ENCODE measurements at regions of chr5 and their contacts with region 1.

Region 1: DNA sequence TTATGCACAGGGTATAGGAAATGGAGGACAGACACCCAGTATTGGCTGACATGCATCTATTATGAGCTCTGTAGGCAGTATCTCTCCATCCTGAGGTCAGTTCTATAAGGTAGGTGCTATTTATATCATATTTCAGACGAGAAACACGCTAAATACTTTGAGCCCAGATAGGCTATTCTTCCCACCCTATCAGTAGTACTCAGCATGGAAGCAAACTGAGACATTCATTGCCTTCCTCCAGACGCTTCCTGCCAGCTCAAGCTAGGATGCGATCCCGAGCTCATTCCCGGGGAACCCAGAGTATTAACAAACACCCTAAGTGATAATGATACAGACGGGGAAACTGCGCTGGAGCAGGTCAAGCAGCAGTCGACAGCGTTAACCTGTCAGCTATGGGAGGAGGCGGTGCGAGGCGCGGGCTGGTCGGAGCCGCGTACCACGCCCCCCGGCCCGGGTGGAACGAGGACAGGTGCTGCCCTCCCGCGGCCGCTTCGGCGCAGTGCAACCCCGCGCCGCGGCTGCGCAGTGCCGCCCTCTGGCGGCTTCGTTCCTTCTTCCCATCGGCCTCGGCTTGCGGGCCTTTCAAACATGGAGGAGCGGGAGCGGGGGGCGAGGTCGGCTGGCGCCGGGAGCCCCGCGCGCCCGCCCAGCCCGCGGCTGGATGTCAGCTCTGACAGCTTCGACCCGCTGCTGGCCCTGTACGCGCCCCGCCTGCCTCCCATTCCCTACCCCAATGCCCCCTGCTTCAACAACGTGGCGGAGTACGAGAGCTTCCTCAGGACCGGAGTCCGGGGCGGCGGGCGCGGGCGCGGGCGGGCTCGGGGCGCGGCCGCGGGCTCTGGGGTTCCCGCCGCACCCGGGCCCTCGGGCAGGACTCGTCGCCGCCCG is at the start of gene LSM11:
- DNase-seq: peak; percentile 85 to 94 (median 88)
- H3K4me3 ChIP-seq: peak within 1 kb of the TSS; percentile 50 to 63
- H3K4me3 Mint-ChIP-seq: peak within 1 kb of the TSS; percentile 93 to 98 (median 96)
- H3K27ac ChIP-seq: peak within 1 kb of the TSS; percentile 45
- H3K27ac Mint-ChIP-seq: peak within 1 kb of the TSS; percentile 62 to 96 (median 94)
- H3K4me1 ChIP-seq: peaks cover 18% of the 10 kb centered on the region
- H3K4me1 Mint-ChIP-seq: peaks cover 19 to 34% (median 28%) of the 10 kb centered on the region in 4 donors
- H3K27me3 ChIP-seq: no peaks in the 10 kb centered on the region
- H3K27me3 Mint-ChIP-seq: no peaks in the 10 kb centered on the region
- total RNA-seq, gene LSM11: 4.4 to 4.8 TPM

Region 2: DNA sequence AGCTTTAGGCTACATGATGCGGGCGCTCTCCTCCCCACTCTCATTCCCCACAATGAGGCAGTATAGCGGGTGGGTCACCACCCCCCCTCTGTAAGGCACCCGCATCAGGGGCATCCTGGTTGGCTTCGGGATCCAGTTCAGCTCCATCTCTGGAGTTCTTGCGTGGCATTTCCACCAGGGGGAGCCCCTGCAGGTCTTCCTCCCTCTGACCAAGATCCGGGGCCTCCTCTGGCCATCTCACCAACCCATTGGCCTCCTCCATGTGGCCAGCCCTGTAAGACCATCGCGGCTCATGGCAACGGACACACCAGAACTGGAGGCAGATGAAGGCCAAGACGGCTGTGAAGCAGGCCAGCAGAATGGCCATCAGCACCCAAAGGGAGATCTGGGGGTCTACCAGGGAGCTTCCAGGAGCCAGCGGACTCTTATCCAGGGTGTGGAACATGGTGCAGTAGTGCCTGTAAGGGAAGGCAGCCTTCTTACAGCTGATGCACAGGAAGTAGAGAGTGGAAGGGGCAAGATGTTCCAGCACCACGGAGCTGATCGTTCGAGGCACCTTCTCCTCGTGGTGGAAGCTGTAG is 400.5 kb before region 1 on chr5:
- CTCF ChIA-PET with region 1: interaction called, 22 read pairs
- POLR2A ChIA-PET with region 1: interaction called, 3 read pairs
- intact Hi-C with region 1: loop called (anchors 5 kb)
- DNase-seq: peak in 2 of 5 donors; percentile 15 to 21
- H3K4me3 ChIP-seq: no peak overlapping the region
- H3K4me3 Mint-ChIP-seq: peak overlapping the region in 1 of 8 donors; percentile 8
- H3K27ac ChIP-seq: no peak overlapping the region
- H3K27ac Mint-ChIP-seq: peak overlapping the region in 5 of 7 donors; percentile 18 to 89 (median 41)
- H3K4me1 ChIP-seq: peaks cover 15% of the 10 kb centered on the region
- H3K4me1 Mint-ChIP-seq: peaks cover 19 to 29% (median 24%) of the 10 kb centered on the region in 4 donors
- H3K27me3 ChIP-seq: no peaks in the 10 kb centered on the region
- H3K27me3 Mint-ChIP-seq: no peaks in the 10 kb centered on the region

Region 3: DNA sequence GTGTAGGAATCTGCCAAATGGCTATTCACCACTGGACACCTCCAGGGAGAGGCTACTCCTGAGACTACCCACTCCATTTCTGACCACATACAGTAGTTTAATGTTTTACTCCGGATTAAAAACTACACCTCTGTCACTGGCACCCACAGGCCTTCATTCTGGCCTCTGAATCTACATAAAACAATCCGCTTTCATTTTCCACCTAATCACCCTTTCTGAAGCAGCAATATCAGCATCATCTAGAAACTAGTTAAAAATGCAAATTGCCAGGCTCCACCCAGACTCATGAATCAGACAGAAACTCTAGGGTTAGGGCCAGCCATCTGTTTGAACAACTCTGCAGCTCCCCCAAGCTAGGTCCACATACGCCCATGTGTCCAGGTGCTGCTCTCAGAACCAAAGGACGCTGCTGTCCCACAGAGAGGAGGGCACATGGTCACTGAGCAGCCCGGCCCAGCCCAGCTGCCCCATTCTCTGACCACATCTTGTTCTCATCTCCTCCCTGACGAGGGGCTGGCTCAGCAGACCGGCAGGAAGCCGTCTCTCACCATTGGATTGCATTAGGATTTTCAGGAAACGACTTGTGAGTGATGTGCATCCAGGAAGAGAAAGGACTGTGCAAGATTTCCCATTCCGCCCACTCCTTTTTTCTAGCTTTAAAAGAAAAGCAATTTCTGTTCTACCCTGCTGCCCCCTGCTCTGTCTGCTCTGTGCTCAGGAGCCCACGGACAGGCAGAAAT is 202.5 kb before region 1 on chr5:
- CTCF ChIA-PET with region 1: interaction called, 24 read pairs
- POLR2A ChIA-PET with region 1: no interaction called
- intact Hi-C with region 1: loop called (anchors 5 kb)
- DNase-seq: peak; percentile 53 to 75 (median 62)
- H3K4me3 ChIP-seq: peak overlapping the region; percentile 12 to 40
- H3K4me3 Mint-ChIP-seq: peak overlapping the region; percentile 71 to 90 (median 80)
- H3K27ac ChIP-seq: peak overlapping the region; percentile 77
- H3K27ac Mint-ChIP-seq: peak overlapping the region; percentile 89 to 95 (median 93)
- H3K4me1 ChIP-seq: peaks cover 95% of the 10 kb centered on the region
- H3K4me1 Mint-ChIP-seq: peaks cover 73 to 94% (median 84%) of the 10 kb centered on the region in 4 donors
- H3K27me3 ChIP-seq: no peaks in the 10 kb centered on the region
- H3K27me3 Mint-ChIP-seq: no peaks in the 10 kb centered on the region

Region 4: GRCh38 chr5:157651623-157652549 is 91.5 kb before region 1 on chr5 and contains the start of gene SOX30:
- CTCF ChIA-PET with region 1: interaction called, 17 read pairs
- POLR2A ChIA-PET with region 1: interaction called, 4 read pairs
- intact Hi-C with region 1: loop called (anchors 1 kb)
- DNase-seq: peak; percentile 85 to 89 (median 86)
- H3K4me3 ChIP-seq: peak within 1 kb of the TSS in 1 of 2 donors; percentile 51
- H3K4me3 Mint-ChIP-seq: peak within 1 kb of the TSS; percentile 78 to 89 (median 84)
- H3K27ac ChIP-seq: peak within 1 kb of the TSS; percentile 52
- H3K27ac Mint-ChIP-seq: peak within 1 kb of the TSS; percentile 65 to 91 (median 86)
- H3K4me1 ChIP-seq: peaks cover 18% of the 10 kb centered on the region
- H3K4me1 Mint-ChIP-seq: peaks cover 11 to 26% (median 18%) of the 10 kb centered on the region in 4 donors
- H3K27me3 ChIP-seq: no peaks in the 10 kb centered on the region
- H3K27me3 Mint-ChIP-seq: no peaks in the 10 kb centered on the region
- total RNA-seq, gene SOX30: 0.14 to 0.15 TPM

Region 5: GRCh38 chr5:157670662-157671591 is 72.5 kb before region 1 on chr5 and contains the start of gene C5orf52:
- CTCF ChIA-PET with region 1: interaction called, 27 read pairs
- POLR2A ChIA-PET with region 1: interaction called, 5 read pairs
- intact Hi-C with region 1: loop called (anchors 1 kb)
- DNase-seq: peak in 2 of 5 donors; percentile 21 to 23
- H3K4me3 ChIP-seq: peak within 1 kb of the TSS; percentile 71 to 85
- H3K4me3 Mint-ChIP-seq: peak within 1 kb of the TSS; percentile 87 to 98 (median 92)
- H3K27ac ChIP-seq: peak within 1 kb of the TSS; percentile 3
- H3K27ac Mint-ChIP-seq: peak within 1 kb of the TSS in 6 of 7 donors; percentile 25 to 90 (median 78)
- H3K4me1 ChIP-seq: peaks cover 13% of the 10 kb centered on the region
- H3K4me1 Mint-ChIP-seq: peaks cover 15 to 27% (median 21%) of the 10 kb centered on the region in 4 donors
- H3K27me3 ChIP-seq: no peaks in the 10 kb centered on the region
- H3K27me3 Mint-ChIP-seq: no peaks in the 10 kb centered on the region
- total RNA-seq, gene C5orf52: not detected

Region 6: DNA sequence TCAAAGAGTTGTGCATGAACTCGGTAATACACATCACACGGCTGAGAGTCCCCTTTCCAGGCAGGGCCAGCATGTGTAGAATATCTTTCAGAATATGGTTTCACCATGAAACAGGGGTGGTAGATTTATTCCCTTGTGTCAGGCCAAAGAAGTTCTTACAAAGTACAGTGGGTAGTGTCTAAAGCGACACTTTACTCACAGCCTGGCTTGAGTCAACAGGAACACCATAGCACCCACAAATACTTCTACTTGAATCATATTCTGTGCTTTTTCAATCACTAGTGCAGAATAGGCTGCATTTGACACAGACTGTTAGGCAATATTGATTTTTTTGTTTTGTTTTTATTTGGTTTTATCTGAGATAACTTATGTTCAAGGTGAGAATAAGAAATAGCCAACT is 12.7 kb after region 1 on chr5:
- CTCF ChIA-PET with region 1: interaction called, 30 read pairs
- POLR2A ChIA-PET with region 1: no interaction called
- intact Hi-C with region 1: no loop called
- DNase-seq: no peak
- H3K4me3 ChIP-seq: no peak overlapping the region
- H3K4me3 Mint-ChIP-seq: no peak overlapping the region
- H3K27ac ChIP-seq: no peak overlapping the region
- H3K27ac Mint-ChIP-seq: no peak overlapping the region
- H3K4me1 ChIP-seq: no peaks in the 10 kb centered on the region
- H3K4me1 Mint-ChIP-seq: no peaks in the 10 kb centered on the region
- H3K27me3 ChIP-seq: no peaks in the 10 kb centered on the region
- H3K27me3 Mint-ChIP-seq: no peaks in the 10 kb centered on the region